PC-3 (cell line): ENCODE measurements at regions of chr12 and their contacts with region 1.

Region 1: GRCh38 chr12:19988459-19988873 is 379.9 kb upstream of the PDE3A start:
- DNase-seq: no peak
- ATAC-seq: no peak
- H3K4me3 ChIP-seq: no peak overlapping the region
- H3K27ac ChIP-seq: no peak overlapping the region
- H3K4me1 ChIP-seq: no peaks in the 10 kb centered on the region
- H3K27me3 ChIP-seq: no peaks in the 10 kb centered on the region
- CTCF ChIP-seq: no peak

Region 2: GRCh38 chr12:20474016-20474415 is 485.6 kb after region 1 on chr12:
- CTCF ChIA-PET with region 1: interaction called, 10 read pairs
- POLR2A ChIA-PET with region 1: no interaction called
- intact Hi-C with region 1: no loop called
- DNase-seq: no peak
- ATAC-seq: no peak
- H3K4me3 ChIP-seq: no peak overlapping the region
- H3K27ac ChIP-seq: no peak overlapping the region
- H3K4me1 ChIP-seq: no peaks in the 10 kb centered on the region
- H3K27me3 ChIP-seq: peaks cover 5% of the 10 kb centered on the region; the same call in 1 of the 2 replicates
- CTCF ChIP-seq: no peak